Mammary epithelial cell (primary cell): ENCODE measurements at regions of chr11 and their contacts with region 1.

Region 1: GRCh38 chr11:32006799-32007388 is 84.0 kb upstream of the RCN1 start:
- DNase-seq: peak; percentile 38
- H3K4me3 ChIP-seq: no peak overlapping the region
- H3K27ac ChIP-seq: no peak overlapping the region
- H3K4me1 ChIP-seq: peaks cover 8% of the 10 kb centered on the region
- H3K27me3 ChIP-seq: no peaks in the 10 kb centered on the region
- CTCF ChIP-seq: peak; percentile 62 to 85

Region 2: GRCh38 chr11:31397239-31397834 is 609.6 kb before region 1 on chr11:
- CTCF ChIA-PET with region 1: no interaction called
- dilution Hi-C with region 1: no loop called
- in situ Hi-C with region 1: no loop called
- intact Hi-C with region 1: loop called (anchors 2 kb)
- DNase-seq: peak; percentile 2
- H3K4me3 ChIP-seq: no peak overlapping the region
- H3K27ac ChIP-seq: no peak overlapping the region
- H3K4me1 ChIP-seq: no peaks in the 10 kb centered on the region
- H3K27me3 ChIP-seq: no peaks in the 10 kb centered on the region
- CTCF ChIP-seq: peak; percentile 65 to 73